ENCODE measurements at regions of chr10 and their contacts with region 1.

Region 1: DNA sequence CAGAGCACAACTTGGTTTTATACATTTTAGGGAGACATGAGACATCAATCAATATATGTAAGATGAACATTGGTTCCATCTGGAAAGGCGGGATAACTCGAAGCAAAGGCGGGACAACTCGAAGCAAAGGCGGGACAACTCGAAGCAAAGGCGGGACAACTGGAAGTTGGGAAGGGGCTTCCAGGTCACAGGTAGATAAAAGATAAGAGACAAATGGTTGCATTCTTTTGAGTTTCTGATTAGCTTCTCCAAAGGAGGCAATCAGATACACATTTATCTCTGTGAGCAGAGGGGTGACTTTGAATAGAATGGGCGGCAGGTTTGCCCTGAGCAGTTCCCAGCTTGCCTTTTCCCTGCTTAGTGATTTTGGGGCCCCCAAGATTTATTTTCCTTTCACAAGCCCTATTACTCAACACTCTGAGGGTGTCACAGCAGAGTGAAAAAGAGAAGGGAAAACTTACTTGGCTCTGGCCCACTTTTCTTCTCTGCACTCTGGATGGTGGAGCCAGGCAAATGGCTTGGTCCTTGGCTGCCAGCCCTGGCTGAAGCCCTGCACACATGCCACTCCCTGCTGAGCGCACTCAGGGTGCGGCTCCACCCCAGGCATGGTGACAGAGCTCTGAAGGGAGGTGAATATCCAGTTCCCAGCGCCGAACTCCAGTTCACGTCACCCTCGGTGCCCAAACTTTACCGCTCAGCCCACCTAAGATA is 46.7 kb downstream of the PARD3 start:
- DNase-seq: peak; percentile 73
- H3K4me3 Mint-ChIP-seq: peak overlapping the region; percentile 65
- H3K27ac Mint-ChIP-seq: peak overlapping the region; percentile 58
- H3K4me1 Mint-ChIP-seq: peaks cover 78% of the 10 kb centered on the region
- H3K27me3 Mint-ChIP-seq: no peaks in the 10 kb centered on the region
- CTCF ChIP-seq: no peak

Region 2: GRCh38 chr10:34801097-34801733 is 32.8 kb after region 1 on chr10:
- CTCF ChIA-PET with region 1: no interaction called
- intact Hi-C with region 1: loop called (anchors 5 kb)
- DNase-seq: no peak
- H3K4me3 Mint-ChIP-seq: no peak overlapping the region
- H3K27ac Mint-ChIP-seq: no peak overlapping the region
- H3K4me1 Mint-ChIP-seq: peaks cover 44% of the 10 kb centered on the region
- H3K27me3 Mint-ChIP-seq: no peaks in the 10 kb centered on the region
- CTCF ChIP-seq: no peak

Region 3: DNA sequence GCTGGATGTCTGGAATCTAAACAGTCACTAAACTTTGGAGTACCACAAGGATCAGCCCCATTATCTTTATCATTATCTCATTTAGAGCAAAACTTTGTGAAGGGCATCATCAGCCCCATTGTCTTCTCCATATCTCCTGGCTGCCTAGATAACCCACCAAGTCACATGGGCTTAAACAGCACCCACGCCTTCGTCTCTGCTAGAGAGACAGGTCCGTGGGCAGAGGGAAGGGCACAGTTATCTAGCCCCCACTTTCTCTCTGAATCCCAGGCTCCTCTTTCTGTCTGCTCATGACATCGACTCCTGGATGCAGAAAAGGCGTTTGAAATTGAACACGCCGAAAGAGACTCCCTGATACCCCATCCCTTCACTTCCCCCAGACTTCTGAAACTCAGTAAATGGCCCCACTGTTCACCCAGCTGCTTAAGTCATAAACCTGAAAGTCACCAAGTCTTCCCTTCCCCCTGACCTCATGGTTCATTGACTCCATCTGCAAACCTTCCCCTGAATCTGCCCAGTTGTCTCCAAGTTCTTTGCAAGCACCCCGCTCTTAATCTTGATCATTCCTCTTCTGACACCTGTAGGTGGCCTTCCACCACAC is 67.6 kb after region 1 on chr10:
- CTCF ChIA-PET with region 1: no interaction called
- intact Hi-C with region 1: no loop called
- DNase-seq: no peak
- H3K4me3 Mint-ChIP-seq: no peak overlapping the region
- H3K27ac Mint-ChIP-seq: no peak overlapping the region
- H3K4me1 Mint-ChIP-seq: no peaks in the 10 kb centered on the region
- H3K27me3 Mint-ChIP-seq: no peaks in the 10 kb centered on the region
- CTCF ChIP-seq: no peak

Region 4: DNA sequence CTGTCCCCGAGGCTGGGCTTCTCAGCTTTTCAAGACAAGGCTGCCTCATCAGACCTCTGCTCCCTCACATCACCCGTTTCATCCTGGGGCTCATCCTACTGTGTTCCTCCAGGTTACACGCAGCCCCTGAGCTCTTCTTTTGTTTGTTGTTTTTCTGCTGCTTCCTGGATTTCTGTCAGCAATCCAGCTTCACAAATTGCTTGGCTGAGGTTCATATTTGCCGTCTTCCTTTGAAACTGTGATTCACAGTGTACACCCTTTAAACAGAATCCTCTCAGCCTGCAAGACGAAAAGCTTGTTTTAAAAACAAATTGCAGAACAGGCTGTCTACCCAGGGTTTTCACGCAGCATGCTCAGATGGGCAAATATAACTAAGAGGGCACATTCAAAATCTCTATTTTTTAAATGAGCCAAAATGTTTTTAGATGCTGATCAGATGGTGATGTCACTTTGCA is 85.8 kb after region 1 on chr10:
- CTCF ChIA-PET with region 1: no interaction called
- intact Hi-C with region 1: no loop called
- DNase-seq: no peak
- H3K4me3 Mint-ChIP-seq: peak overlapping the region; percentile 3
- H3K27ac Mint-ChIP-seq: no peak overlapping the region
- H3K4me1 Mint-ChIP-seq: peaks cover 8% of the 10 kb centered on the region
- H3K27me3 Mint-ChIP-seq: peaks cover 30% of the 10 kb centered on the region
- CTCF ChIP-seq: no peak